Right cardiac atrium (tissue), 5 donors: ENCODE measurements at regions of chr16 and their contacts with region 1.

Region 1: DNA sequence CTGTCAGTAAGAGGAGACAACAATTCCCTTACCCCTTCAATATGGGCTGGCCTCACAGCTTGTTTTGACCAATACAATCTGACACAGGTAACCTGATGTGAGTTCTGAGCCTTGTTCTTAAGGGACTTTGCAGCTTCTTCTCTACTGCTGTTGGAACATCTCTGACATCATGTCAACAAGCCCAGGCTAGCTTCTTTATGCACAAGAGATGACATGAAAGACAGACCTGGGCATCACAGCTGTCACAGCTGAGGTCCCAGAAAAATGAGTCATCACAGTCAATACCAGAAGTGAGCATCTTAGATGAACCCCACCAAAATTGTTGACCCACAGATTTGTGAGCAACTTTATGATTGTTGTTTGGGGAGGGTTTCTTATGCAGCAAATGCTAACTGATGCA is 431.7 kb upstream of the PSMD7 start:
- DNase-seq: no peak
- ATAC-seq: no peak
- H3K4me3 ChIP-seq: no peak overlapping the region
- H3K27ac ChIP-seq: no peak overlapping the region
- H3K4me1 ChIP-seq: no peaks in the 10 kb centered on the region
- H3K27me3 ChIP-seq: no peaks in the 10 kb centered on the region

Region 2: DNA sequence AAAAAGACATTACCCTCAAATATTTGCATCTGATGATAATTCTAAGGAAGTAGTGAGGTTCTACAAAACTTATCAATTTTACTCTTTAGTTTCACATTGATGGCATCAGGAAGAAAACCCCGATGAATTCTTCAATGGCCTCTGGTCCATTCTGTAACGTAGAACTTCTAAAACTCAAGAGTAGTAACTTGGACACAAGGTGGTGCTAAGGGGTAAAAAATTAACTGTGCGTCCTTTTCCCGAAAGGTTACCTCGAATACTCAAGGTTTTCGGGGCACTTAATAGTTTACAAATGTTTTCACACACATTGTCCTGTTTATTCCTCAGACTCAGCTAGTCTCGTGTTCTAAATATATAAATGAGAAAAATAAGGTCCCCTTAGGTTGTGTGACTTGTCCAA is 299.6 kb before region 1 on chr16:
- intact Hi-C with region 1: loop called in 1 of 4 experiments (anchors 10 kb)
- DNase-seq: no peak
- ATAC-seq: no peak
- H3K4me3 ChIP-seq: no peak overlapping the region
- H3K27ac ChIP-seq: no peak overlapping the region
- H3K4me1 ChIP-seq: no peaks in the 10 kb centered on the region
- H3K27me3 ChIP-seq: no peaks in the 10 kb centered on the region

Region 3: GRCh38 chr16:73697336-73697735 is 167.5 kb before region 1 on chr16:
- intact Hi-C with region 1: no loop called
- DNase-seq: no peak
- ATAC-seq: no peak
- H3K4me3 ChIP-seq: no peak overlapping the region
- H3K27ac ChIP-seq: no peak overlapping the region
- H3K4me1 ChIP-seq: no peaks in the 10 kb centered on the region
- H3K27me3 ChIP-seq: no peaks in the 10 kb centered on the region

Region 4: GRCh38 chr16:74257061-74257460 is 392.2 kb after region 1 on chr16:
- intact Hi-C with region 1: no loop called
- DNase-seq: no peak
- ATAC-seq: no peak
- H3K4me3 ChIP-seq: no peak overlapping the region
- H3K27ac ChIP-seq: no peak overlapping the region
- H3K4me1 ChIP-seq: peaks cover 1% of the 10 kb centered on the region
- H3K27me3 ChIP-seq: no peaks in the 10 kb centered on the region